Mucosa of descending colon (tissue), 3 donors: ENCODE measurements at regions of chr15 and their contacts with region 1.

Region 1: GRCh38 chr15:80072285-80072994 is 13.0 kb downstream of the ZFAND6 start:
- DNase-seq: peak in 1 of 3 donors; percentile 60
- ATAC-seq: peak; percentile 94
- H3K4me3 ChIP-seq: no peak overlapping the region
- H3K4me1 ChIP-seq: peaks cover 49% of the 10 kb centered on the region
- CTCF ChIP-seq: no peak

Region 2: GRCh38 chr15:79916502-79917132 is 155.8 kb before region 1 on chr15:
- intact Hi-C with region 1: no loop called
- DNase-seq: no peak
- ATAC-seq: no peak
- H3K4me3 ChIP-seq: no peak overlapping the region
- H3K4me1 ChIP-seq: no peaks in the 10 kb centered on the region
- CTCF ChIP-seq: no peak

Region 3: DNA sequence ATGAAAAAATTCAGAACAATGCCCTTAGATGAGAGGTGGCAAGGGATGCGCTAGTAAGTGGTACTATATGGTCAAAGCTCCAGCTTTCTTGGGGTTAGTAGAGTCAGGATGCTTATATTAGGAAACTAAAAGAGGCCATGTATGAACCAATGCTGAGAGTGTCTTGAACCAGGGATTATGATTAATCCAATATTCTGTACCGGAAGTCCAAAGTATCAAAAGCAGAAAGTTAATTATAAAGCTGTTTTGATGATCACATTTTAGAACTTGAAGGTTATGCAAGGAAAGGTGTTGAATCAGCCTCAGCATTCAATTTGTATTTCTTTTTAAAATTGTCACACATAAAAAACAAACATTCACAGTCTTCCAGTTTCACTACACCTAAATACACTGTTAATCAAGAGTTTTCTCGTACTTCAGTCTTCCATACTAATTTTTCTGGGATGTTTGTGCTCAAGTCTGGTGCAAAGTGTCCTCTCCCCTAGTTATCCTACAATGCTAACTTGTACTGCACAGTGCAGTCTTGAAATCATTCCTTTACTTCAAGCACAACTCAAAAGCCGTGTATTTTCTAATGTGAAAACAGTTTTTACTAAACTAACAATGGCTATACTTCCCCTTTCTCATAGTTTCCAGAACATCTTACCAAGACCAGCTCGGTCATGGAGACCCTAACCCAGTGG is 69.6 kb after region 1 on chr15:
- intact Hi-C with region 1: loop called in 1 of 2 experiments (anchors 10 kb)
- DNase-seq: no peak
- ATAC-seq: peak; percentile 46
- H3K4me3 ChIP-seq: no peak overlapping the region
- H3K4me1 ChIP-seq: no peaks in the 10 kb centered on the region
- CTCF ChIP-seq: no peak